Heart left ventricle (tissue), 16 donors: ENCODE measurements at regions of chr6 and their contacts with region 1.

Region 1: GRCh38 chr6:167898673-167899311 is 72.1 kb downstream of the AFDN start:
- DNase-seq: no peak
- ATAC-seq: peak in 1 of 4 donors; percentile 62
- H3K4me3 ChIP-seq: no peak overlapping the region
- H3K27ac ChIP-seq: no peak overlapping the region
- H3K4me1 ChIP-seq: peaks cover 0 to 3% (median 0%) of the 10 kb centered on the region in 12 donors
- H3K27me3 ChIP-seq: no peaks in the 10 kb centered on the region
- CTCF ChIP-seq: peak; percentile 53 to 89 (median 80)
- POLR2A ChIP-seq: no peak

Region 2: DNA sequence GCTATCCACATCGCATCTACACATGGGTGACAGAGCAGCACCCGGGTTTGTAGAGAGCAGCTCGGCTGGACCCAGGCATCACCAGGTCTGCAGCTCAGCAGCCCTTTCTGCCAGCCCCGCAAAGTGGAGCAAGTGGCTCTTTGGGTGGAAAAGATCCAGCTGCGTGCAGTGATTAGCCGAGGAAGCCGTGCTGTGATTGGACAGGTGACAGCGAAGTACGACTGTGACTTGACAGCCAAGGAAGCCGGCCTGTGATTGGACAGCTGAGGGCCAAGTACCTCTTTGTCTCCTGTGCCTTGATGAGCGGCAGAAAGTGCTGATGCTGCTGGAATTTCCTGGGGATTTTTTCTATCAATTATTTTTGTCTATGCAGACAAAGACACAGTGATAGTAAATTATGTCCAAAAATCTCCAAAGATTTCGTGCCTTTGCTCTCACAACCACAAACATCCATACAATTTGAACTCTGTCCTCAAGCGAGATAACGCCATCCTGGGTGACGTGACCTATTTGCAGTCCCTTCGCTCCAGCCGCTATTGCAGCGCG is 678.8 kb before region 1 on chr6:
- intact Hi-C with region 1: loop called in 3 of 10 experiments (anchors 5 to 10 kb)
- DNase-seq: no peak
- ATAC-seq: no peak
- H3K4me3 ChIP-seq: no peak overlapping the region
- H3K27ac ChIP-seq: no peak overlapping the region
- H3K4me1 ChIP-seq: no peaks in the 10 kb centered on the region
- H3K27me3 ChIP-seq: peaks cover 0 to 1% (median 0%) of the 10 kb centered on the region in 9 donors
- CTCF ChIP-seq: no peak
- POLR2A ChIP-seq: no peak

Region 3: DNA sequence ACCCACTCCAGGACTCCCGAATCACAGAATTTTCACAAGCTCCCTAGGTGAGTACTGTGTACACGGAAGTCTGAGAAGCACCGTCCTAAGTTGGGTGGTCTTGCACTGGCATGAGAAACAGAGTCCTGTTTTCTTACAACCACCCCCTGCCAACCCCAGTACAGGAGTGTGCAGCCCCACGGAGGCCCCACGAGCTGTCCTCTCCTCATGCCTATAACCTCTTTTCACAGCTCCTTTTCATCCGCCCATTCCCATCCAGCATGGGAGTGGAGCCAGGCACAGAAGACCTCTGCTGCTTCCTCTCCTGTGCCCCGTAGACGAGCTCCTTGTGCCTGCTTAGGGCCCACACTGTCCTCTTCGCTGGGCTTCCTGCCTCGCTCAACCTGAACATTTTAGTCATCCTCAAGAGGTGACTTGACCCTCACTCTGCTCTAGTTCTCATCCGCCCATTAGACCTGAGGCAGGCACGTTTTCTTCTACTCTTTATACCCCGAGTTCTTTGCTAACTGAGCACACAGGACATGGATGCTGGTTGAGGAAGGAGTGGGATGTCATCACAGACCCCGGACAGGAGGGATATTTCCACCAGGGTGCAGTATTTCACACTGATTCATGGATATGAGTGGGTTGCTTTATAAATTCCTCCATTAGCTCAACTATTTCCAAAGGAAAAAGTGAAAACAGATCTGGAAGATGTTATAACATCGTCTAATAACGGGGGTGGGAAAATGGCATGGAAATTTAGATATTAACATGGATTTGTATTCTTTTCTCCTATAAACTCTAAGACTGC is 413.4 kb before region 1 on chr6:
- intact Hi-C with region 1: loop called (anchors 2 to 5 kb)
- DNase-seq: peak in 1 of 5 donors; percentile 51
- ATAC-seq: peak; percentile 65 to 91 (median 80)
- H3K4me3 ChIP-seq: no peak overlapping the region
- H3K27ac ChIP-seq: no peak overlapping the region
- H3K4me1 ChIP-seq: peaks cover 0 to 13% (median 0%) of the 10 kb centered on the region in 12 donors
- H3K27me3 ChIP-seq: no peaks in the 10 kb centered on the region
- CTCF ChIP-seq: peak; percentile 38 to 76 (median 63)
- POLR2A ChIP-seq: no peak

Region 4: DNA sequence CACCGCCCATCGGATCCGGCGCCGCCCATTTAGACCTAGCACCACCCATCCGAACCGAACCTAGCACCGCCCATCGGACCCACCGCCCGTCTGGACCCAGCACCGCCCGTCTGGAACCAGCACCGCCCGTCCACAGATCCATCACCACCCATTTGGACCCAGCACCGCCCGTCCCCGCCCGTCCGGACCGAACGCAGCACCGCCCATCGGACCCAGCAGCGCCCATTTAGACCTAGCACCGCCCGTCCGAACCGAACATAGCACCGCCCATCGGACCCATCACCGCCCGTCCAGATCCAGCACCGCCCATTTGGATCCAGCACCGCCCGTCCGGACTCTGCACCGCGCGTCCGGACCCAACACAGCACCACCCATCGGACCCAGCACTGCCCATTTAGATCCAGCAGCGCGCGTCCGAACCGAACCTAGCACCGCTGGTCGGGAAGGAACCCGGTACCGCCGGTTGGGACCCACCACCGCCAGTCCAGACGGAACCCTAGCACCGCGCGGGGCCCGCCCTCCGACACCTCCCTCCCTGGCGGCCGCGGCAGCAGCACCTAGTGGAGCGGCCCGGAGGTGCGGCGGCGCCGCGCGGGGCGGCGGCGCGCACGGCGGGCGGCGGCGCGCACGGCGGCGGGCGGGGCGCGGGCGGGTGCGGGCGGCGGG is 72.4 kb before region 1 on chr6:
- intact Hi-C with region 1: loop called in 3 of 10 experiments (anchors 5 to 10 kb)
- DNase-seq: peak; percentile 77 to 83 (median 79)
- ATAC-seq: peak; percentile 85 to 94 (median 92)
- H3K4me3 ChIP-seq: peak overlapping the region; percentile 54 to 90 (median 76)
- H3K27ac ChIP-seq: peak overlapping the region in 8 of 12 donors; percentile 17 to 75 (median 58)
- H3K4me1 ChIP-seq: peaks cover 0 to 46% (median 22%) of the 10 kb centered on the region in 12 donors
- H3K27me3 ChIP-seq: peaks cover 0 to 26% (median 0%) of the 10 kb centered on the region in 9 donors
- CTCF ChIP-seq: peak; percentile 14 to 57 (median 42)
- POLR2A ChIP-seq: no peak